PC-3 (cell line): ENCODE measurements at regions of chr5 and their contacts with region 1.

Region 1: DNA sequence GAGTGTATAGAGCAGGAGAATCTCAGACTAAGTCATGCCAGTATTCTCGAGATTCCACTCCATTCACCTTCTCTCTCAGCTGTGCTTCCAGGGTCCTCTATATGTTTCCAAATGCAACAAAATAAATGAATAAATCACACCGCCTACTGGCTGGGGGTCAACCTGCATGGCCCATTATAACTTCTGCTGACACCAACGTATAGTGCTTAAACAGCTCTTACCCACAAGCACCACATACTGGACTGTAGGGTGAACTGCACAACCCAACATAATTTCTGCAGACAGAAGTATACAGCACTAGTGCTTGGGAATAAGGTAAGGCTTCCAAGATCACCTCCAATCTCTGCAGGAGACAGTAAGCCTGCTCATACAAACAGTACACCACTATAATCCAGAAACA is 33.1 kb upstream of the HTR4 start:
- DNase-seq: peak; percentile 93
- ATAC-seq: peak; percentile 99
- H3K4me3 ChIP-seq: no peak overlapping the region
- H3K27ac ChIP-seq: no peak overlapping the region
- H3K4me1 ChIP-seq: no peaks in the 10 kb centered on the region
- H3K27me3 ChIP-seq: peaks cover 44% of the 10 kb centered on the region
- CTCF ChIP-seq: peak; percentile 99

Region 2: DNA sequence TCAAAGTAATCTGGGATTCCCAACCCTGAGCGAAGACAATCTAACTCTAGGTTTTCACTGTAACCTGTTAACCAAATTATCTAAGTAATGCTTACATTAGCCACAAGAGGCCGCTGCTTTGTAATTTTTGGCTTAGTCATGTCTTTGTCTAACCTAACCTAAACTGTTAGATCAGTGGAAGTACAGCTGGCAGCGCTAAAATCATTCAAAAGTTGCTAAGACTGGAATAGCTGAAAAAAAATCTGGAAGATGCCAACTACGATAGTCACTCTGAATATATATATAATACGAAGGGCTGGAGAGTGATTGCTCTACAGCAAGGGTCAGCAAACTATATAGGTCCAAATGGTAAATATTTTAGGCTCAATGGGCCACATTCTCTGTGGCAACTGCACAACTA is 243.4 kb before region 1 on chr5:
- CTCF ChIA-PET with region 1: interaction called, 3 read pairs
- POLR2A ChIA-PET with region 1: no interaction called
- intact Hi-C with region 1: loop called (anchors 1 kb)
- DNase-seq: peak; percentile 91
- ATAC-seq: peak; percentile 93
- H3K4me3 ChIP-seq: no peak overlapping the region
- H3K27ac ChIP-seq: no peak overlapping the region
- H3K4me1 ChIP-seq: no peaks in the 10 kb centered on the region
- H3K27me3 ChIP-seq: no peaks in the 10 kb centered on the region
- CTCF ChIP-seq: peak; percentile 97

Region 3: GRCh38 chr5:148523139-148523538 is 164.3 kb before region 1 on chr5:
- CTCF ChIA-PET with region 1: no interaction called
- POLR2A ChIA-PET with region 1: no interaction called
- intact Hi-C with region 1: loop called (anchors 10 kb)
- DNase-seq: peak; percentile 44
- ATAC-seq: peak; percentile 86
- H3K4me3 ChIP-seq: no peak overlapping the region
- H3K27ac ChIP-seq: no peak overlapping the region
- H3K4me1 ChIP-seq: no peaks in the 10 kb centered on the region
- H3K27me3 ChIP-seq: peaks cover 83% of the 10 kb centered on the region
- CTCF ChIP-seq: peak; percentile 59

Region 4: DNA sequence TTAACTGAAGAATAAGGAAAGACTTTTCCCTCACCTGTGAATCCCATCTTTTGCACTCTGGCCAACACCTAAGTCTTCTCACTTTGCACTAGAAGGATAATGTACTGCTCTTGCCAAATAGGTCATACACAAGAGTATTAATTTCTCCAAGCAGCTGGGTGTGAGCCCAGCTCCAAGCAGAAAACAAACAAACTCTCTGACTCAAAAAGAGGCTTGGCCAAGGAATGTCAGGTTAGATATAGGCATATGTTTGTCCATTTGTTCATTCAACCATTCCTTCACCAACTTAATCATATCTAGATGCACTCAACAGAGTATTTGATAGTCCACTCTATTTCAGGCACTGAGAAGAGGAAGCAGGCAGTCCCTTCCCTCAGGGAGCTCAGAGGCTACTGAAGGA is 117.5 kb before region 1 on chr5:
- CTCF ChIA-PET with region 1: interaction called, 3 read pairs
- POLR2A ChIA-PET with region 1: no interaction called
- intact Hi-C with region 1: loop called (anchors 10 kb)
- DNase-seq: peak; percentile 73
- ATAC-seq: peak; percentile 100
- H3K4me3 ChIP-seq: no peak overlapping the region
- H3K27ac ChIP-seq: no peak overlapping the region
- H3K4me1 ChIP-seq: peaks cover 8% of the 10 kb centered on the region; the same call in 1 of the 2 replicates
- H3K27me3 ChIP-seq: peaks cover 60% of the 10 kb centered on the region
- CTCF ChIP-seq: no peak